Testis (tissue), 5 donors: ENCODE measurements at regions of chr15 and their contacts with region 1.

Region 1: GRCh38 chr15:66497502-66498455 is at the start of gene SNAPC5:
- DNase-seq: peak; percentile 98
- H3K4me3 ChIP-seq: peak within 1 kb of the TSS; percentile 85 to 91
- H3K27ac ChIP-seq: peak within 1 kb of the TSS; percentile 64 to 77
- H3K4me1 ChIP-seq: peaks cover 13% of the 10 kb centered on the region
- H3K27me3 ChIP-seq: no peaks in the 10 kb centered on the region
- CTCF ChIP-seq: peak; percentile 96 to 100 (median 99)
- POLR2A ChIP-seq: no peak
- total RNA-seq, gene SNAPC5: 30.7 to 45.4 TPM

Region 2: DNA sequence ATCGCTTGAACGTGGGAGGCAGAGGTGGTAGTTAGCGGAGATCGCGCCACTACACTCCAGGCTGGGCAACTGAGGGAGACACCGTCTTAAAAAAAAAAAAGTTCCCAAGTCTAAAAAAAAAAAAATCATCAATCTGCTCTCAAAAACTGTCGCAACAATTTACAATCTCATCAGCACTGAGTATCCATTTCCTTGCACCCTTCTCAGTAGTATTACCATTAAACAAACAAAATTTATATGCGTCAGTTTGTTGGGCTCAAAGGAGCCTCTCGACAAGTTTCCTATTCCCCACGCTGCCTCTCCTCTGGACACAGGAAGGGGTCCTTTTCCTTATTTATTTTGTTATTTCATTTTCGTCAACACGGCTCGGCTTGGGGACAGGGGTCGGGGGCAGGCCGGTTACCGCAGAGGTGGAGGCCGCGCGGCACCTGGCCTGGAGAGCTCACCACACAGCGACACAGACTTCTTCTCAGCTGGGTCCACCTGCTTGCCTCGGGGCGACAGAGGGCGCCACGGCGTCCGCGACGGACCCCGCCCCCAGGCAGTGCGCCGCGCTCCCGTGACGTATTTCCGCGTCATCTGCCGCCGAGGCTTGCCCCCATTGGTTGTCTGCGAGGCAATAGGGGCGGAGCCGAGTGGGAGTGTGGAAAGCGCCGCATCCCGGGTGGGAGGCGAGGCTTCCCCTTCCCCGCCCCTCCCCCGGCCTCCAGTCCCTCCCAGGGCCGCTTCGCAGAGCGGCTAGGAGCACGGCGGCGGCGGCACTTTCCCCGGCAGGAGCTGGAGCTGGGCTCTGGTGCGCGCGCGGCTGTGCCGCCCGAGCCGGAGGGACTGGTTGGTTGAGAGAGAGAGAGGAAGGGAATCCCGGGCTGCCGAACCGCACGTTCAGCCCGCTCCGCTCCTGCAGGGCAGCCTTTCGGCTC is 111.3 kb before region 1 on chr15 and contains the start of gene MAP2K1:
- intact Hi-C with region 1: loop called (anchors 5 kb)
- DNase-seq: peak; percentile 98
- H3K4me3 ChIP-seq: peak within 1 kb of the TSS; percentile 92 to 93
- H3K27ac ChIP-seq: peak within 1 kb of the TSS; percentile 93 to 94
- H3K4me1 ChIP-seq: peaks cover 17% of the 10 kb centered on the region
- H3K27me3 ChIP-seq: no peaks in the 10 kb centered on the region
- CTCF ChIP-seq: peak; percentile 70 to 81 (median 76)
- POLR2A ChIP-seq: no peak
- total RNA-seq, gene MAP2K1: 27.6 to 29.6 TPM

Region 3: GRCh38 chr15:66700802-66701421 is 203.1 kb after region 1 on chr15:
- intact Hi-C with region 1: no loop called
- DNase-seq: peak; percentile 97
- H3K4me3 ChIP-seq: peak overlapping the region; percentile 65 to 76
- H3K27ac ChIP-seq: peak overlapping the region; percentile 59 to 77
- H3K4me1 ChIP-seq: peaks cover 4% of the 10 kb centered on the region
- H3K27me3 ChIP-seq: no peaks in the 10 kb centered on the region
- CTCF ChIP-seq: no peak
- POLR2A ChIP-seq: no peak